ENCODE measurements at regions of chr11 and their contacts with region 1.

Region 1: DNA sequence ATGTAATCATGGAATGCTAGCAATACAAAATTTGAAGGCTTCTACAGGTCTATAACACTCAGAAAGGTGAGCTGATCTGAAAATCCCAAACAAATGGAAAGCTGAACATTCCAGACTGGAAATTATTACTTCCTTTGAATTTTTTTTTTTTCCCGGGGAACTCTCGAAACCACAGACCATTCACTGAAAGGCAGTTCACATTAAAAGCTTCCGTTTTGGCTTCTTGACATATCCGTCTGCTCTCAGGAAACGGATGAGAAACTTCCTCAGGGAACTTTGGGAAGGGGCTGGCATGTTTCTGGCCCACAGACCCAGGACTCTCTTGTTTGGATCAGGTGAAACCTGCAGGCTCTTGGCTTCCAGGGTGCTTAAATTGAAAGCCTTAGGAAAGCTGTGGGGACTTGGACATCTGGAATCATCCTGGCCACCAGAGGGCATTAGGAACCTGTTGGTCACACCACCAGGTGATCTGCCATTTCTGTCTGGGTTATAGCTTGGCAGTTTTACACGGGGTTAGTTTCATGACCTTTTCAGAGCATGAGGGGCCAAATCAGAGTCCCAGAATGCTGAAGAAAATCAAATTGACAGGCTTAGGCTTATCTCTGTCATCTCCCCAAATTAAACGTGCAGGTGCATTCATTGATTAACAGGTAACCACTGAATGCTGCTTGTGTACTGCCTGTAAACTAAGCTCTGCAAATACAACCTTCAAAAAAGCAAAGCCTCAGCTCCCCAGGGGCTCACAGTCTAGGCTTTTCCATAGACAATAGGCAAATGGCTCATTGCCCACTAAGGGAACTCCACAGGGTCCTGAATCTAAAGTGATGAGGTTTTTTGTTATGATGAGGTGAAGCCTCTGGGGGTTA is 22.7 kb upstream of the GRAMD1B start:
- DNase-seq: peak; percentile 80
- ATAC-seq: peak; percentile 74
- H3K4me3 Mint-ChIP-seq: peak overlapping the region; percentile 29
- H3K27ac Mint-ChIP-seq: no peak overlapping the region
- H3K4me1 Mint-ChIP-seq: peaks cover 13% of the 10 kb centered on the region
- H3K27me3 Mint-ChIP-seq: peaks cover 16% of the 10 kb centered on the region
- CTCF ChIP-seq: peak; percentile 77

Region 2: DNA sequence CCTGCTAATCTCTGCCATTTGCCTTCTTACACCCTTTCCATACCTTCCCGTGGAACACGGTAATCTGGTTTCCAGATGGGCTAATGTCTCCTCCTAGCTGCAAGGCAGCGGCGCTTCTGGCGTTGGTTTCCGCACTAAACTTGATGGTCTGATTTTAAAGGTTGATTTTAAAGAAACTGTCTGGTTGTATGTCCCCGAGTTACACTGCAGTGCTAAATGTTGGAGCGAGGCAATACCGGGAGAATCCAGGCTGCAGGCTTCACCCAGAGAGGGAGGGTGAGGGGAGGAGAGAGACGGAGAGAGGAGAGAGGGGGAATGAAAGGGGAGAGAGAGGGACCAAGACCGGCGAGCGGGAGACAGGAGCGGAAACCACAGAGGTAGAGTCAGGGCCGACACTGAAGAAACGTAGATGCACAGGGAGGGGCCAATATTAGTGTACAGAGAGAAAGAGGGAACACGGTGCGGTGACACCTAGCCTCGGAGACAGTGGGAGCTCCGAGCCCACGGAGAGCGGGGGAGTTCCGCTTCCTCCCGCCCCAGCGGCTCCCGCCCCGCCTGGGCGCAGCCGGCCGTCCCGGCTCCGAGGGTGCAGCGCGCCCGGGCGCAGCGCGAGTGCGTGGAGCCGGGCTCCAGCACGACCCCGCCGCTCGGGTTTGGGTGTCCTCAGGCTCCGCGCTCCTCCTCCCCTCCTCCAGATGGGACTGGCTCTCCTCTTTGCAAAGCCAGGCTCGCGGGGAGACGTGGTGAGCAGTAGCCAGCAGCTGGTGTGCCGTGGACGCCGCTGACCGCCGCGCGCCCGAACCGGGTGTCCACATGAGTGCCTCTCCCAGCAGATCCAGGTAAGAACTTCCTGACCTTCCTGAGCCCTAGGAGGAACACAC is 49.2 kb before region 1 on chr11:
- CTCF ChIA-PET with region 1: interaction called, 16 read pairs
- POLR2A ChIA-PET with region 1: no interaction called
- intact Hi-C with region 1: no loop called
- DNase-seq: peak; percentile 68
- ATAC-seq: peak; percentile 77
- H3K4me3 Mint-ChIP-seq: peak overlapping the region; percentile 74
- H3K27ac Mint-ChIP-seq: peak overlapping the region; percentile 84
- H3K4me1 Mint-ChIP-seq: peaks cover 32% of the 10 kb centered on the region
- H3K27me3 Mint-ChIP-seq: peaks cover 55% of the 10 kb centered on the region
- CTCF ChIP-seq: peak; percentile 9

Region 3: GRCh38 chr11:123392844-123393243 is 14.5 kb before region 1 on chr11:
- CTCF ChIA-PET with region 1: interaction called, 41 read pairs
- POLR2A ChIA-PET with region 1: no interaction called
- intact Hi-C with region 1: no loop called
- DNase-seq: no peak
- ATAC-seq: no peak
- H3K4me3 Mint-ChIP-seq: no peak overlapping the region
- H3K27ac Mint-ChIP-seq: no peak overlapping the region
- H3K4me1 Mint-ChIP-seq: peaks cover 2% of the 10 kb centered on the region
- H3K27me3 Mint-ChIP-seq: peaks cover 22% of the 10 kb centered on the region
- CTCF ChIP-seq: no peak

Region 4: DNA sequence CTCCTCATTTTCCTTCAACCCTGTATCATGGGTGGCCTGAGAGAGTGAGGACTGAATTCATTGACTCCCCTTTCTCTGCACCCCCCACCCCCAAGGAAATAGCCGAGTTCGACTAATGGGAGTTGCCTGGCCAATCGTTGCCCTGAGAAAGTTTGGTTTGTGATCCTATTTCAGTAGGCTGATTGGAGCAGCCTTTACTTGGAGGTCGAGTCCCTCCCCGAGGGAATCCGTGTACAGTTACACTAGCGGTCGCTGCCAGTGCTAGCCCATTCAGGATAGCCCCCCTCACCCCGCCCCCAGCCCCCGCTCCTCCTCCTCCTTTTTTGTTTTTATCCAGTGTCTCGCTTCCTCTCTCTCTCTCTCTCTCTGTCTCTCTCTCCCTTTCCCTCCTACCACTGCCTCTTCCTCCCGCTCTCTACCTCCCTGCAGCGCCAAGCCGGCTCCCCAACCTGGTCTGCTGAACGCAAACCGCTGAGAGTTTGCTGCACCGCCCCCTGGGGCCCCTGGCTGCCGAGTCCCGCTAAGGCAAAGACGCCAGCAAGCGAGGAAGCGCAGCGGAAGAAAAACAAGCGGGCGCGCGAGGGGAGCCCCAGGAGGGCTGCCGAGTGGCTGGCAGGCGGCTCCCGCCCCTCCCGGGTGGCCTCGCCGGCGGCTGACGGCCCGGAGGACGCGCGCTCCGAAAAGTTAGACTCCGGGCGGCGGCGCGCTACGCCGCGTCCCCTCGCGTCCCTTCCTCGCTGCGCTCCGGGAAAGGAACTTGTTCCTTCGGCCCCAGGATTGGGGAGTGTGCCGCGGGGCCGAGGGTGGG is 22.8 kb after region 1 on chr11 and contains the start of gene GRAMD1B:
- CTCF ChIA-PET with region 1: interaction called, 46 read pairs
- POLR2A ChIA-PET with region 1: interaction called, 4 read pairs
- intact Hi-C with region 1: no loop called
- DNase-seq: peak; percentile 87
- ATAC-seq: peak; percentile 79
- H3K4me3 Mint-ChIP-seq: peak within 1 kb of the TSS; percentile 82
- H3K27ac Mint-ChIP-seq: peak within 1 kb of the TSS; percentile 81
- H3K4me1 Mint-ChIP-seq: peaks cover 29% of the 10 kb centered on the region
- H3K27me3 Mint-ChIP-seq: no peaks in the 10 kb centered on the region
- CTCF ChIP-seq: no peak
- total RNA-seq, gene GRAMD1B: 15.4 to 16.2 TPM

Region 5: DNA sequence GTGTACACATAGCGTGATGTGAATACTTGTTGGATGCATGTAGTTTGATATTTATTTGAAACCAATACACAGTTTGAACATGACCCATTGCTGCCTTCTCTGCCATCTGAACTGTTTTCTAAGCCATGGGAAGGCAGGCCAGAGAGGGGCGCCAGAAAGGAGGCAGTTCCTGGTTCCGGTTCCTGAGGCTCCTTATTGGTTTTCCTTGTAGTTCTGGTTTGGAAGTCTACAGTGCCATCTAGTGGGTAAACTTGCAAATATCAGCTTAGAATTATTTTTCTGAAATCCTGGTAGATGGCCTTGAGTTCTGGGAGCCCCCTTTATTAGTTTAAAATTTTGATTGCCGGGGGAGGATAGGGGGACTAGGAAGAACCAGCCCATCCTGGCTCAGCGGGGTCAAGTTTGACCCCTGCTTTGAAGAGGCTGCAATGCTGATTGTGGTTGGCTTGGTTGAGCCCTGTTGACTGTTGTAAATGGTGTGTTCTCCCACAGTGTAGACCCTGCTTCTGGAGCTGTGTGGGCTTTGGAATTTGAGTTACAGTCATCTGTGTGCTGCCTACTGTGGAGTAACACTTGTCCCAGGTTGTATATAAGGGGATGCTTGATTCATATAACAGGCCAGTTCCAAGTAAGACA is 71.1 kb after region 1 on chr11:
- CTCF ChIA-PET with region 1: interaction called, 178 read pairs
- POLR2A ChIA-PET with region 1: interaction called, 3 read pairs
- intact Hi-C with region 1: loop called (anchors 1 kb)
- DNase-seq: peak; percentile 25
- ATAC-seq: peak; percentile 35
- H3K4me3 Mint-ChIP-seq: peak overlapping the region; percentile 7
- H3K27ac Mint-ChIP-seq: peak overlapping the region; percentile 14
- H3K4me1 Mint-ChIP-seq: peaks cover 42% of the 10 kb centered on the region
- H3K27me3 Mint-ChIP-seq: no peaks in the 10 kb centered on the region
- CTCF ChIP-seq: peak; percentile 86